ENCODE measurements at regions of chr7 and their contacts with region 1.

Region 1: DNA sequence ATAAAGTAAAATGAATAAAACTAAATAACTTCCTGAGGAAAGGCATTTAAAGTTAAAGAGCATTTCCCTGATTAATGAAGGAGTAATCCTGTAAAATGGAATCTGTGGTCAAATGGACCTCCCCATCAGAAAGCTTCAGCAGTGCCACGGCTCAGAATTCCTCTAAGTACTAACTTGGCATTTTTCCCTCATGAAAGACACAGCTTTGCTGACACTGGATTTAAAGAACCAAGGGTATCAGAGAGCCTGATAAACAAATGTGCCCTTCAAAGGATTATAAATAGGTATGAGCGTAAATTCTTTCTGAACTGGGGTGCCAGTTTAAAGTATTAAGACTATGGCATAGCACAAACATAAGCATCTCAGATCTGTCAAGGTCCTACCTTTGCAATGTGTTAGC is 24.2 kb upstream of the RNF148 start:
- DNase-seq: no peak
- H3K4me3 ChIP-seq: no peak overlapping the region
- H3K27ac ChIP-seq: no peak overlapping the region
- H3K4me1 ChIP-seq: no peaks in the 10 kb centered on the region
- CTCF ChIP-seq: no peak

Region 2: DNA sequence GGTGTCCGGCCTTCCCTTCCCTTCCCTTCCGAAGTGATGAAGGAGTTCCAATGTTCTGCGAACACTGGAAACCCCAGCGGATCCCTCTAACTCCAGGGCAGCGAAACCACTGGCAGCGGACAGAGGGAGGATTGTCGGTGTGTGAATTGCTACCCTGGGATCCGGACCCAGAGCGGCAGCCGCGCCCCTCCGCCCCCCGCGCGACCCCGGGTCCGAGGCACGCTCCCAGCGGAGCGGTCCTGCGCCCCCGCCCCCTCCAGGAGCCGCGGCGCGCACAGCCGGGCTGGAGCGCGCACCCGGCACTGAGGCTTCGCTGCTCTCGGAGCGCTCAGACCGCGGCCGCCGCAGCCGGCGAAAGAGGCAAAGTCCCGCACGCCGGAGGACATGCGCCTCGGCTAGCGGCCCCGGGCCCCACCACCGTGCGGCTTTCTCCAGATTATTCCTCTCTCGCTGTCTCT is 854.0 kb before region 1 on chr7 and contains the start of gene PTPRZ1:
- CTCF ChIA-PET with region 1: no interaction called
- POLR2A ChIA-PET with region 1: no interaction called
- intact Hi-C with region 1: loop called (anchors 5 kb)
- DNase-seq: no peak
- H3K4me3 ChIP-seq: no peak within 1 kb of the TSS
- H3K27ac ChIP-seq: no peak within 1 kb of the TSS
- H3K4me1 ChIP-seq: no peaks in the 10 kb centered on the region
- CTCF ChIP-seq: no peak
- total RNA-seq, gene PTPRZ1: not detected in 2 replicates

Region 3: DNA sequence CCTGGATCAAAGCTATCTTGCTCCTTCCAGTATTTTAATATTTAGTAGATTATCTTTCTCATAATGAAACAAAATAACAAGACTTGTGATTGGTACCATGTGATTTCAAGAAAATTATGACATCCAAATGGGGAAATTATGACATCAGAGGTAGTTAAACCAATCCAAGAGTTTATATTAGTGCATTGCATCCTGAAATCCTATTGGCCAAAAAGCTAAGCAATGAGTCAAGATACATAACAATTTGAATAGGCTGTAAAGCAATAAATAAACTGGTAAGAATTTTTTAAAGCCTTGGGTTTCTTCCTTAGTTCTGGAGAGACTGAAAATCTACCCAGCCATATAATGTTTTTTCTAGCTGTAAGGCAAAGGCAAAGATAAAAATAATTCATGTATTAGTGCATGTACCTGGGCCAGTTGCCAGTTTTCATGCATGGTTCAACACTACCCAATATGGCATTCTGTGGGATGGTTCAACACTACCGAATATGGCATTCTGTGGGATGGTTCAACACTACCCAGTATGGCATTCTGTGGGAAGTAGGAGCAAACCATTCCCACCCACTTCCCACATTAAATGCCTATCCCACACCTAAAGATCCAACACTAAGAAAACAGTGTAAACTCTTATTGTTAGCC is 23.9 kb before region 1 on chr7 and contains the start of gene RNF148:
- CTCF ChIA-PET with region 1: no interaction called
- POLR2A ChIA-PET with region 1: no interaction called
- intact Hi-C with region 1: no loop called
- DNase-seq: no peak
- H3K4me3 ChIP-seq: no peak within 1 kb of the TSS
- H3K27ac ChIP-seq: no peak within 1 kb of the TSS
- H3K4me1 ChIP-seq: no peaks in the 10 kb centered on the region
- CTCF ChIP-seq: no peak
- total RNA-seq, gene RNF148: not detected in 2 replicates

Region 4: DNA sequence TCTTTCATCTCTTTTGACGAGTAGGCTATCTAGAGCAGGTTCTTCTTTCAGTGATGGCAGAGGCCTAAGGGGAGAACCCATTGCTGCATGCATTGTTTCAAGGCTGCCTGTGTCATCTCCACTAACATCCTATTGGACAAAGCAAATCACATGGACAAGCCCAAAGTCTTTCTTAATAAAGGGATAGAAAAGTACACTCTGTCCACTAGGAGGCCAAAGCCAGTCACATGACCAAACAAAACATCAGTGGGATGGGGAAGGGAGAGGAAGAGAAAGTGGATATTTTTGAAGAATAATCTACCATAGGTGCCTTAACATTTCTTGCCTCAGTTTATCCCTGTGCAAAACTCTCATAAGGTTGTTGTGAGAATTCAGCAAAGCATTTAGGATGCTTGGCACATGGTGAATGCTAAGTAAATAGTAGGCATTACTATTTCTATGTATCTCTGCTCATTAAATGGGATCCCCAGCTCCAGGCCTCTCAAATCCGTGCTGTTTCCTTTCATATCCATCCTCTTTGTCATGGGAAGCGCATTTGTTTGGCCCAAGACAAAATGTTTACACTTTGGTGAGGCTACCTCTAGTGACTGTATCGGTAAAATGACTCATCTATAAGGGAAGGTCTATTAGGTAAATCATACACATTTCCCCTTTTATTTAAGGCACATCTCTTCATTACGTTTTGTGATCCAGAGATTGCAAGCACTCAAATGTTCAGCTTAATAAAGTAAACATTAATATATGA is 176.0 kb after region 1 on chr7:
- CTCF ChIA-PET with region 1: no interaction called
- POLR2A ChIA-PET with region 1: no interaction called
- intact Hi-C with region 1: no loop called
- DNase-seq: no peak
- H3K4me3 ChIP-seq: no peak overlapping the region
- H3K27ac ChIP-seq: no peak overlapping the region
- H3K4me1 ChIP-seq: no peaks in the 10 kb centered on the region
- CTCF ChIP-seq: 0 out of 2 replicates have a peak, but pooled peaks have one; percentile 20

Region 5: GRCh38 chr7:123271231-123271630 is 544.4 kb after region 1 on chr7:
- CTCF ChIA-PET with region 1: no interaction called
- POLR2A ChIA-PET with region 1: no interaction called
- intact Hi-C with region 1: no loop called
- DNase-seq: no peak
- H3K4me3 ChIP-seq: no peak overlapping the region
- H3K27ac ChIP-seq: no peak overlapping the region
- H3K4me1 ChIP-seq: no peaks in the 10 kb centered on the region
- CTCF ChIP-seq: no peak

Measured in OCI-LY7 (cell line).